HEK293 (cell line): ENCODE measurements at regions of chr6 and their contacts with region 1.

Region 1: DNA sequence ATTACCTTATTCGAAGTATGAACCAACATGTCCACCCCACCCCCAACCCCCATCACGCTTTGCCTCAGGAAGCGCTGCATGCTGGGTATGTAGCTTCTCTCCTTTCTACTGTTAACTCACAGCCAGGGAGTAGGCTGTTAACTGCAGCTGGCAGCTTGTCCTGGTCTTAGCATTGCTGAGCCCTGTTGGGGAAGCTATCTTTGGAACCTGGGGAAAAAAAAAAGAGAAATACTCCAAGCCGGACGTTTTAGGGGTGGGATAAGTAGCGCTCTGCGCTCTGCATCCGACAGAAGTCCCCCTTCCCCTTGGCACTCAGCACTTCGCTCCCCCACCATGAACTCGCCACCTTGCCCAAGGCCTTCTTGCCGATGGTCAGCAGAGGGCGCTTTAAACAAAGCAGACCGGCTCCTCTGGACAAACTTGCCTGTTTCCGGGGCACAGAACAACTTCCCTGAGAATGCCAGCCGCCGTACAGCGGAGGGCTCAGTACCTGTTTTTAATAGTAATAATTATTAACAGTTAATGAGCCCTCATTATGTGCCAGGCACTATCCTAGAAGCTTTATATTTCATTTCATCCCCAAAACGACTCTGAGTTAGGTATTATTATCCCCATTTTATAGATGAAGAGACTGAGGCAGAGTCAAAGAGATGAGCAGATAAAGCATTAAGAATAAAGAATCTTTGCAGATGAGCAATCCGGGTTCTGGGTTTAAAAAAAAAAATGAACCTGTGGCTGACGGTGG is 35.2 kb upstream of the MDFI start:
- H3K4me3 ChIP-seq: peak overlapping the region; percentile 12
- H3K27ac ChIP-seq: no peak overlapping the region
- H3K4me1 ChIP-seq: no peaks in the 10 kb centered on the region
- CTCF ChIP-seq: peak; percentile 87

Region 2: GRCh38 chr6:41424370-41425058 is 178.5 kb before region 1 on chr6:
- CTCF ChIA-PET with region 1: interaction called, 118 read pairs
- POLR2A ChIA-PET with region 1: no interaction called
- H3K4me3 ChIP-seq: no peak overlapping the region
- H3K27ac ChIP-seq: no peak overlapping the region
- H3K4me1 ChIP-seq: peaks cover 5% of the 10 kb centered on the region; the same call in 1 of the 2 replicates
- CTCF ChIP-seq: peak; percentile 51

Region 3: GRCh38 chr6:41581381-41581991 is 21.6 kb before region 1 on chr6:
- CTCF ChIA-PET with region 1: interaction called, 10 read pairs
- POLR2A ChIA-PET with region 1: interaction called, 6 read pairs
- H3K4me3 ChIP-seq: no peak overlapping the region
- H3K27ac ChIP-seq: no peak overlapping the region
- H3K4me1 ChIP-seq: peaks cover 18% of the 10 kb centered on the region
- CTCF ChIP-seq: no peak

Region 4: GRCh38 chr6:41615254-41615653 is 12.2 kb after region 1 on chr6:
- CTCF ChIA-PET with region 1: interaction called, 10 read pairs
- POLR2A ChIA-PET with region 1: no interaction called
- H3K4me3 ChIP-seq: no peak overlapping the region
- H3K27ac ChIP-seq: no peak overlapping the region
- H3K4me1 ChIP-seq: no peaks in the 10 kb centered on the region
- CTCF ChIP-seq: no peak

Region 5: DNA sequence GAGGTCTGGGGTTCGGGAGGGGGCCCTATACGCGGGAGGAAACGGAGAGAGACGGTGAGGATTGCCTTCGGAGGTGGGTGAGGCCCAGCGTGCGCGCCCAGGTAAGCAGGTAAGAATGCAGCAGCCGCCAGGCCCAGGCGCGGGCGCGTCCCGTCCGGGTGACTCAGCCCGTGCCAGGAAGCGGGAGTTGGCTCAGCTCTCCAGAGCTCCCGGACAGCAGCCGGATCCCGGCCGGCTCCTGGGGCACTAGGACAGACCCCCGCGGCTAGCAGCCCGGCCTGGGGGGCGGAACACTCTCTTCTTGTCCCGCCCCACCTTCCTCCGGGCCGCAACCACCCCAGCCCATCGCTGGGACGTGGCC is 33.8 kb after region 1 on chr6:
- CTCF ChIA-PET with region 1: interaction called, 11 read pairs
- POLR2A ChIA-PET with region 1: interaction called, 5 read pairs
- H3K4me3 ChIP-seq: no peak overlapping the region
- H3K27ac ChIP-seq: no peak overlapping the region
- H3K4me1 ChIP-seq: no peaks in the 10 kb centered on the region; the same call in 1 of the 2 replicates
- CTCF ChIP-seq: no peak

Region 6: DNA sequence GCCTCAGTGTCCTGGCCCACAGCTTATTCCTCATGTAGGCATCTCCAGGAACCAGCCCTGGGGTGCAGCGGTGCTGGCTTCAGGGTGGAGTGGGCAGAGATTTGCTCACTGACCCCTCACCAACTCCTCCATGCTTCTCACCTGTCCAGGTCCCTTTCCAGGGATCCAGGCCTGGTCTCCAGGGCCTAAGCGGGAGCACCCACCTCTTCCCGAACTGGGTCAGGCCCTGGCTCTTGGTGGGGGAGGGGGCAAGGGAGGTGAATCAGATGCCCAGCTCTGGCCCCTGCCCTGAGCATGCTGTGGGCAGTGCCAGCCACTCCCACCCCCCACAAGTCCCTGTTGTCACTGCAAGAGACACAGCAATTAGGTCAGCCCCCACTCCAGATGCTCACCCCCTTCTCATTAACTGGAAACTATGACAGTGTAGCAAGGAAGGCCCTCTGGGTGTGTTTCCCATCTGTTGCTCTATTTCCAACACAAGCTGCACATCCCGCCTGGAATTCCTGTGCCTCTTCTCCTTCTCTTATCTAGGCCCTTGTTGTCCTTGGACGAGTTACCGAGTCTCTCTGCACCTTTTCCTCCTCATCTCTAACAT is 72.2 kb after region 1 on chr6:
- CTCF ChIA-PET with region 1: interaction called, 90 read pairs
- POLR2A ChIA-PET with region 1: interaction called, 29 read pairs
- H3K4me3 ChIP-seq: no peak overlapping the region
- H3K27ac ChIP-seq: no peak overlapping the region
- H3K4me1 ChIP-seq: no peaks in the 10 kb centered on the region
- CTCF ChIP-seq: no peak

Region 7: DNA sequence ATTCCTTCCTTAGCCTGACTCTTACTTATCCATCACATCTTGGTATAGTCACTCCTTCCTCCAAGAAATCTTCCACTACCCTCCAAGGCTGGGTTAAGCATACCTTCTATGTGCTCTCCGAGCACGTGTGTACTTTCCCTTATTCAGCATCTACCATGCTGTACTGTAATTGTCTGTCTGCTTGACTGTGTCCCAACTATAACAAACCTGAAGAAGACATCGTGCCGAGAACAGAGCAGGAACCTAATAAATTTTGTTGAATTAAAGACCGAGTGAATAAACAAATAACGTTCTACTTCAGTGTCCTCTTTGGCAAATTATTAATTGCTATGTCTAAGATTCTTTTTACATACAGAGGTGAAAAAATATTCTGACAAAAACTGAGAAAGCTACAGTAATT is 256.3 kb after region 1 on chr6:
- CTCF ChIA-PET with region 1: no interaction called
- POLR2A ChIA-PET with region 1: no interaction called
- H3K4me3 ChIP-seq: no peak overlapping the region
- H3K27ac ChIP-seq: no peak overlapping the region
- H3K4me1 ChIP-seq: no peaks in the 10 kb centered on the region
- CTCF ChIP-seq: no peak

Region 8: GRCh38 chr6:42043787-42044475 is 440.9 kb after region 1 on chr6:
- CTCF ChIA-PET with region 1: interaction called, 13 read pairs
- POLR2A ChIA-PET with region 1: no interaction called
- H3K4me3 ChIP-seq: no peak overlapping the region
- H3K27ac ChIP-seq: no peak overlapping the region
- H3K4me1 ChIP-seq: peaks cover 18% of the 10 kb centered on the region
- CTCF ChIP-seq: peak; percentile 93

Region 9: DNA sequence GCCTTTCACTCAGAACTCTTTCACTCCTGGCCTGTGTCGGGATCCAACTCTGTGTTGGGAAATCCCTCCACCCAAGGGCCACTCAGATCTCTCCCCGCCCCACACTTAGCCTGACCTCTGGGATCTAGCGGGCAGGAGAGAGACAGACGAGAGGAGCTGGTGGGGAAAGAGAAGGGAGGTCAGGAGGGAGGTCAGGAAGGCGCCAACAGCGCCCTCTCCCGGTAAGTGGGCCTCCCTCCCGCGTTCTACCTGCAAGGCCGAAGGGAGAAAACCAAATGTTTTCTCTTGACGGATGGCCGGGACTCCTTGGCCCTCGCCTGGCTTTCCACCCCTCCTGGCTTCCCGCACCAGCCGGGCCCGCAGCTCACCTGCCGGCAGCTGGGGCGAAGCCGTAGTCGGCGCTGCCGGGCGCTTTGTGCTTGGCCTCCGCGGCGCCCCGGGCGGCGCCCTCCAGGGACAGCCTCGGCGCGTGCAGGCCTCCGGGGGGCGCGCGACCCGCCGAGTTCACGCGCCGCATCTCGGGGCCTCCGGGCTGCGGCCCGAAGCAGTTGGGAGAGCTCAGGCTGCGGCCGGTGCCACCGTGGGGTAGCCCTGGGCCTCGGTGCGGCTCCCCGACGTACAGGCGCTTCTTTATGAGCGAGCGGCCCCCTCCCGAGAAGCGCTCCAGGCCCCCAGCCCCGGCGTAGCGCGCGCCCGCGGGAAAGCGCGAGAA is 501.2 kb after region 1 on chr6:
- CTCF ChIA-PET with region 1: no interaction called
- POLR2A ChIA-PET with region 1: no interaction called
- H3K4me3 ChIP-seq: no peak overlapping the region
- H3K27ac ChIP-seq: no peak overlapping the region
- H3K4me1 ChIP-seq: no peaks in the 10 kb centered on the region
- CTCF ChIP-seq: no peak